Activated CD4-positive, alpha-beta memory T cell treated with anti-CD3 and anti-CD28 coated beads for 36 hours (primary cell): ENCODE measurements at regions of chr10 and their contacts with region 1.

Region 1: DNA sequence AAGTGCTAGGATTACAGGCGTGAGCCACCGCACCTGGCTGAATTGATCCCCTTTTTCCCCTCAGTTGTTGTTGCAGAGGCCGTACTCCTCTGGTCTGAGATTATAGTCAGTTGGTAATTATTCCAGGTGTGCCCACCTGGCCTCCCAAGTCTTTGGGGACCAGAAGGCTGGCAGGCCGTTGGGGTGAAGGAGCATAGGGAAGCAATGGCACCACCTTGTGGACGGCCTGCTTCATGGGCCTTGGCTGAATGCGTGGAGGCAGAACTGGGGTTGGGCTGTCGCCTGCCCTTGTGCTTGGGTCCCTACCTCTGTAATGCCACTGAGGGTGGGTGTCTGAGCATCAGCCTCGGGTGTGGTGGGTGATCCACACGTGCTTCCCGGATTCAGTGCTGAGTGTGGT is 125.7 kb downstream of the RGS10 start:
- DNase-seq: peak; percentile 81
- H3K4me3 Mint-ChIP-seq: no peak overlapping the region
- H3K27ac Mint-ChIP-seq: no peak overlapping the region
- H3K4me1 Mint-ChIP-seq: no peaks in the 10 kb centered on the region
- H3K27me3 Mint-ChIP-seq: no peaks in the 10 kb centered on the region

Region 2: DNA sequence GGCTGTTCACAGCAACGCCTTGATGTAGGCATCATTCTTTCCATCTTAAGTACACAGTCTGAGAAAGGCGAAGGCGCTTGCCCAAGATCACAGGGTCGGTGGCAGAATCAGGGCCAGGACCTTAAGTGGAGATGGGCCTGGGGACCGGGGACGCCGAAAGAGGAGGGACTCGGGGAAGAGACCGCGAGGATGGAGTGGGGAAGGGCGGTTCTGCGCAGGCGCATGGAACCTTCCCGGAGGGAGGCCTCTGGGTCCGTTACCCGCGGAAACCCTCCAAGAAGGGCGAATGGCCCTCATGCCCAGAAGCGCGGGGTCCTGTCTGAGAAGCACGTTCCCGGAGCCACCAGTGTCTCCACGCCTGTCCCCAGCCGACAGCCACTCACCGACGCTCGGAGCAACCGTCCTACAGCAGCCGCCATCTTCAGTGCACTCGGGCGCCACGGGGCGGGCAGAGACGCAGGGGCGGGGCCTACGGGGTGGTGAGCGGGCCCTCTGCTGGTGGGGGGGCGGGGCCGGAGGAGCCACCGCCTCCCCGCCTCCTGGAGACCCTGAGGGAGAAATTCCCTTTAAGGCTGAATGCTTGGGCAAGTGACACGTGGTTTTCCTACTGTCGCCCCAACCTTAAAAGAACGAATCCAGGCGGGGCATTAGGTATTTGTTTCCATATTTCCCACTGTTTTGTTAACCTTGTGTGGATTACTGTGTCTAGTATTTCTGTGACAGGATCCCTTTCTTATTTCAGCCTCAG is 238.3 kb before region 1 on chr10 and contains the start of gene PRDX3:
- CTCF ChIA-PET with region 1: no interaction called
- POLR2A ChIA-PET with region 1: no interaction called
- intact Hi-C with region 1: no loop called
- DNase-seq: peak; percentile 96
- H3K4me3 Mint-ChIP-seq: peak within 1 kb of the TSS; percentile 88
- H3K27ac Mint-ChIP-seq: peak within 1 kb of the TSS; percentile 94
- H3K4me1 Mint-ChIP-seq: peaks cover 35% of the 10 kb centered on the region
- H3K27me3 Mint-ChIP-seq: no peaks in the 10 kb centered on the region
- total RNA-seq, gene PRDX3: 173 to 182 TPM

Region 3: GRCh38 chr10:119270762-119271366 is 146.0 kb before region 1 on chr10:
- CTCF ChIA-PET with region 1: no interaction called
- POLR2A ChIA-PET with region 1: no interaction called
- intact Hi-C with region 1: no loop called
- DNase-seq: peak; percentile 69
- H3K4me3 Mint-ChIP-seq: no peak overlapping the region
- H3K27ac Mint-ChIP-seq: peak overlapping the region; percentile 45
- H3K4me1 Mint-ChIP-seq: peaks cover 49% of the 10 kb centered on the region
- H3K27me3 Mint-ChIP-seq: no peaks in the 10 kb centered on the region

Region 4: GRCh38 chr10:119445311-119445934 is 28.6 kb after region 1 on chr10:
- CTCF ChIA-PET with region 1: interaction called, 10 read pairs
- POLR2A ChIA-PET with region 1: no interaction called
- intact Hi-C with region 1: no loop called
- DNase-seq: peak; percentile 87
- H3K4me3 Mint-ChIP-seq: no peak overlapping the region
- H3K27ac Mint-ChIP-seq: no peak overlapping the region
- H3K4me1 Mint-ChIP-seq: no peaks in the 10 kb centered on the region
- H3K27me3 Mint-ChIP-seq: no peaks in the 10 kb centered on the region